HEK293 (cell line): ENCODE measurements at regions of chr15 and their contacts with region 1.

Region 1: DNA sequence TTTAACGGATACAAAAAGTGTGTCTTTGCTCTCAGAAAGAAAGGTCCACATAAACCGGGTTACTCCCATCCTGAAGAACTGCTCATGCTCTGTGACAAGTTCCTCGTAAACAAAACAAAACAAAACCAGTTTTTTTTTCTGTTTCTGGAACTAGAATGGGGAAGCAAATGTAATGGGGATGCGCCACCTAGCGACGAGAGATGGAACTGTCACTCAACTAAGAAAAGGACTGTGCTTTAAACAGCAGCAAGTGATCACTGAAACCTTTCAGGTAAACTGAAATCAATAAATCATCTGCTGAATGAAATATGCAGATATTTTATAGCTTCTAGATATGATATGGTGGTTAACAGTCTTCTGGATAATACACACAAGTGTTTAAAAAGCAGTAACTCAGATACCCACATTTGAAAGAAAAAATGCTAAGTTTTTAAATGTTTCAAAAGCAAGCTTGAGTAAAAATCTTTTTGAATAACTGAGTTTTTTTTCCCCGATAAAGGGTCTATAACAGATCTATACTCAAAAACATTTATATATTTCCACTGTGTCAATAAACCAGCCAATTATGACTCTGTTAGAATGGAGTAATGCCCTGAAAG is 10.9 kb downstream of the TM2D3 start:
- H3K4me3 ChIP-seq: no peak overlapping the region
- H3K27ac ChIP-seq: no peak overlapping the region
- H3K4me1 ChIP-seq: peaks cover 4% of the 10 kb centered on the region; the same call in 1 of the 2 replicates
- CTCF ChIP-seq: peak; percentile 73

Region 2: GRCh38 chr15:101294731-101295606 is 346.3 kb before region 1 on chr15 and contains the start of gene SNRPA1:
- CTCF ChIA-PET with region 1: interaction called, 64 read pairs
- POLR2A ChIA-PET with region 1: interaction called, 4 read pairs
- H3K4me3 ChIP-seq: peak within 1 kb of the TSS; percentile 64
- H3K27ac ChIP-seq: peak within 1 kb of the TSS; percentile 95
- H3K4me1 ChIP-seq: peaks cover 11% of the 10 kb centered on the region
- CTCF ChIP-seq: no peak; the same call in 1 of the 2 replicates

Region 3: DNA sequence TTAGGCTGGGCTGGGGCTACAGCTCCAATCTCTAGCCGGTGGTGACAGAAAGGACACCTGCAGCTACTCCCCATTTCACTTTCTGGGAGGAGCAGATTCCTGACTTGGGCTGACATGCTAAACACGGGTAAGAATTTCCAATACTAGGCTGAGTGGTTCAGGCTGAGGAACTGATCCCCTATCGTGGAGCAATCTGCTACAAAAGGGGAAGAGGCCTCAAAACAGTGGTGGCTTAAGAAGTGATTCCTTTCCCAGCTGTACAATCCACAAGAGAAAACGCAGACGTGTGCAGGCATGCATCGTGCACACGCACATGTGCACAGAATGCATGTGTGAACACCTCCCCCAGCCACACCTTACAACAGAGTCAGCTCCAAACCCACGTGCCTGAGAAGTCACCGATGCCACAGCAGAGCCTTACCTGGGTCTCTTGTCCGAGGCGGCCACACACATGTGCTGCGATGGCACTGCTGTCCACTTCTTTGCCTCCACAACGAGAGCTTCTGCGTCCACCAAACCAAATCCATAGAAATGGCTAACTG is 259.5 kb before region 1 on chr15:
- CTCF ChIA-PET with region 1: no interaction called
- POLR2A ChIA-PET with region 1: no interaction called
- H3K4me3 ChIP-seq: no peak overlapping the region
- H3K27ac ChIP-seq: no peak overlapping the region
- H3K4me1 ChIP-seq: no peaks in the 10 kb centered on the region
- CTCF ChIP-seq: no peak

Region 4: DNA sequence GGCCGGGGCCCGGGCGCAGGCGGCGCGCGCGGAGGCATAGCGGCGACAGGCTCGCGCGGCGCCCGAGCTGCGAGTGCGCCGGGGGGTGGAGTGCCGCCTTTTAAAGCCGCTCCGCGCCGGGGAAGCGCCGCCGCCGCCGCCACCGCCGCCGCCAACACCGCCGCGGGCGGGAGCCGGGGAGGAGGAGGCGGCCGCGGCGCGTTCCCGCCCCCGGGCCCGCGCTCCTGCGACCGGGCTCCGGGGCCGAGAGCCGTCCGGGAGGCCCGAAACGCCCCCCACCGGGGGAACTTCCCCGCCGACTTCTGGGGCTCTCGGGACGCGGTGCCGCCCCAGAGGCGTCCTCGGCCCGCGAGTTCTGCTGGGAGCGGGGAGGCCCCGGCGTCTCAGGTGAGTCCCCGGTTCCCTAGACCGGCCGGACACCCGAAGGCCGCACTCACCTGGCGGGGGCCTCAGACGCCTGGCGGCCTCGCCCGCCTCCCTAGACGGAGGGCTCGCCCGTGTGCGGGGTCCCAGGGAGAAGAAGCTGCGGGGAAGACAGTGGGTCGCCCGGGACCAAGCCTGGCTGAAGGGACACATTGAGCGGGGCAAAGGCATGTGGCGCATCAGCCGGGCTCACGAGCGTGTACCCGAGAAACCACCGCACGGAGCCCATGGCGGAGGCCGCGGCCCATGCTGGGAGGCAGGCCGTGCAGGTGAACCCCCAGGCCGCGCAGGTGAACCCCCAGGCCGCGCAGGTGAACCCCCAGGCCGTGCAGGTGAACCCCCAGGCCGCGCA is 151.4 kb before region 1 on chr15 and contains the start of gene PCSK6:
- CTCF ChIA-PET with region 1: interaction called, 11 read pairs
- POLR2A ChIA-PET with region 1: no interaction called
- H3K4me3 ChIP-seq: peak within 1 kb of the TSS; percentile 43
- H3K27ac ChIP-seq: peak within 1 kb of the TSS; percentile 84
- H3K4me1 ChIP-seq: peaks cover 4% of the 10 kb centered on the region
- CTCF ChIP-seq: peak; percentile 38; the same call in 1 of the 2 replicates

Region 5: GRCh38 chr15:101537483-101538080 is 103.7 kb before region 1 on chr15:
- CTCF ChIA-PET with region 1: interaction called, 10 read pairs
- POLR2A ChIA-PET with region 1: no interaction called
- H3K4me3 ChIP-seq: no peak overlapping the region
- H3K27ac ChIP-seq: no peak overlapping the region
- H3K4me1 ChIP-seq: no peaks in the 10 kb centered on the region
- CTCF ChIP-seq: no peak

Region 6: GRCh38 chr15:101590783-101591182 is 50.5 kb before region 1 on chr15:
- CTCF ChIA-PET with region 1: interaction called, 16 read pairs
- POLR2A ChIA-PET with region 1: no interaction called
- H3K4me3 ChIP-seq: no peak overlapping the region
- H3K27ac ChIP-seq: no peak overlapping the region
- H3K4me1 ChIP-seq: no peaks in the 10 kb centered on the region
- CTCF ChIP-seq: no peak

Region 7: DNA sequence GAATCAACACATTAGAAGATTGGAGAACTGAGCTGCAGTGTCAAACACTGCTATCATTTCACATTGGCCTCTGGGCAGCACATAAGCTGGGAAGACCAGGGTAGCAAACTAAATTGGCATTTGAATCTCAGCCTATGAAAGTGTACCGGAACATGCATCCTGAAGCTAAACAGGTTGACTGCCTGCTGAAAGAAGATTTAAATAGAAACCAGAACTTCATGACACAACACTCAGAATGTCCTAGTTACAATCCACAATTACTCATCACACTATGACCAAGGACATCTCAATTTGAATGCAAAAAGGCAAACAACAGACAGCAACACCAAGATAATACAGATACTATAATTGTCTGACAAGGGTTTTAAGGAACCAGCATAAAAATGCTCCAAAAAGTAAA is 15.3 kb before region 1 on chr15:
- CTCF ChIA-PET with region 1: interaction called, 61 read pairs
- POLR2A ChIA-PET with region 1: no interaction called
- H3K4me3 ChIP-seq: no peak overlapping the region
- H3K27ac ChIP-seq: no peak overlapping the region
- H3K4me1 ChIP-seq: no peaks in the 10 kb centered on the region
- CTCF ChIP-seq: no peak

Region 8: DNA sequence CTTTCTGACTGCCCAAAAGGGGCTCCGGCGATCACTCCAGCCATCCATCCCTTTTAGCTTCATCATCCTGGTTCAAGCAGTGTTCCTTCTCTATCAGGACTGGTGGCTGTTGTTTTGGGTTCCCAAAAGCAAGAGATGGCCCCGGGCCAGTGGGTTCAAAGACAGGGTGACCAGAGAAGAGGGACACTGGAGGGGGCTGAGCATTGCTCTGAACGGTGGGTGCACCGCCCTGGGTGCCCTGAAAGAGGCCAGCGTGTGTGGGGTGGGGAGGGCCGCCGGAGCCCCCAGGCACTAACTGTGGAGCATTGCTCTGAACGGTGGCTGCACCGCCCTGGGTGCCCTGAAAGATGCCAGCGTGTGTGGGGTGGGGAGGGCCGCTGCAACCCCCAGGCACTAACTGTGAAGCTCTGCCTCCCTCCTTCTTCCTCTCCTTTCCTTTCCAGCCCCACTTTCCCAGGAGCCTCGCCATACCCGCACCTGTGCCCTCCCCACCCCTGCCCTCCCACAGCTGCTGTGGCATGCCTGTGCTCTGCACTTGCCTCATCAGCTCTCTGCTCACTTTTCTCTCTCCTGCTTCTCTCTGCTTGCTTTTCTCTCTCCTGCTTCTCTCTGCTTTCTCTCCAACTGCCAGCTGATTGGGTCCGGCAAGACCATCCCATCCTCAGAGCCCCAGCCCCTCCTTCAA is 124.6 kb after region 1 on chr15:
- CTCF ChIA-PET with region 1: interaction called, 22 read pairs
- POLR2A ChIA-PET with region 1: no interaction called
- H3K4me3 ChIP-seq: no peak overlapping the region
- H3K27ac ChIP-seq: no peak overlapping the region
- H3K4me1 ChIP-seq: no peaks in the 10 kb centered on the region
- CTCF ChIP-seq: no peak

Region 9: GRCh38 chr15:101795455-101795854 is 154.2 kb after region 1 on chr15:
- CTCF ChIA-PET with region 1: no interaction called
- POLR2A ChIA-PET with region 1: no interaction called
- H3K4me3 ChIP-seq: no peak overlapping the region
- H3K27ac ChIP-seq: no peak overlapping the region
- H3K4me1 ChIP-seq: no peaks in the 10 kb centered on the region
- CTCF ChIP-seq: no peak